Activated CD4-positive, alpha-beta T cell treated with anti-CD3 and anti-CD28 coated beads, Interleukin-2, amount 10 ng/mL, durations not matched to agents 7 days and 5 days (primary cell): ENCODE measurements at regions of chr12 and their contacts with region 1.

Region 1: GRCh38 chr12:6451348-6452244 is at the start of gene TAPBPL:
- DNase-seq: peak; percentile 88
- H3K4me3 Mint-ChIP-seq: peak within 1 kb of the TSS; percentile 100
- H3K27ac Mint-ChIP-seq: peak within 1 kb of the TSS; percentile 98
- H3K4me1 Mint-ChIP-seq: peaks cover 71% of the 10 kb centered on the region
- H3K27me3 Mint-ChIP-seq: no peaks in the 10 kb centered on the region
- total RNA-seq, gene TAPBPL: 45.8 to 47.9 TPM

Region 2: DNA sequence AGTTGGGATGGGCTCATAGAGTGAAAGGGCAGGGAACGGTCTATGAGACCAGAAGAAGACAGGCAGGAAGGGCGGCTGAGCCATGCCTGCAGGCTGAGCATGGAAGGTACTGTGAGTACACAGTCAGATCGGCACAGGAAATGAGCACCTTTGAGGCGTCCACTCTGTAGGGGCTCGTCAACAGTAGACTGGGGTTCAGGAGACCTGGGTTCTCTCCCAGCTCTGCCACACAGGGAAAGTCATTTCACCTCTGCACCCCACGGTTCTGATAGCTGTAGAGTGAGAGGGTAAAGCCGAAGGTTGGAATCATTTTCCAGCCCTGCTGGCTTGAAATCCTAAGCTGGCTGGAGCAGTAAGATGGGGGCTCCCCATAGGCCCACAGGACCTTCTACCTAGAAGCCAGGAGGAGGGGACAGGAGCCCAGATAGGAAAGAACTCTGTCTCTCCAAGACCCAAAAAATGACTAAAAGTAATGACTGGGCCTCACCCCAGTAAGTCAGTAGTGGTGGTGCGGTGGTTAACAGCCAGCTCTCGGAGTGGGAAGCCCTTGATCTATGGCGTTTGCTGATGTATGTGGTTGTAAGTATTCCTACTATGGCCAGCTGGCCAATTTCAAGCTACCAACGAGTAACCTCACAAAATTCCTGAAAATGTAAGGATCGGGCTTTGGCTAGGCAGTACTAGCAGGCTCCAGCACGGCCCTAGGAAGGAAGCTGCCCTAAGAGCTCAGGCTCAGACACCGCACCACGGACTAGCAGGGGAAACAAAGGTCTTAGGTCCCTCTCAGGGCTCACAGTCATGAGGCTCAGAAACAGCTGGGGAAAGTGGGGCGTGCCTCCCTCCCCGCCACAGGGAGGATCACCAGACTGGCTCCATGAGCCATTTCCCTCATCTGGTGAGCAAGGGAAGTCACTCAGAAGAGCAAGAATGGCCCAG is 17.1 kb before region 1 on chr12:
- CTCF ChIA-PET with region 1: interaction called, 11 read pairs
- POLR2A ChIA-PET with region 1: no interaction called
- DNase-seq: peak; percentile 56
- H3K4me3 Mint-ChIP-seq: no peak overlapping the region
- H3K27ac Mint-ChIP-seq: peak overlapping the region; percentile 93
- H3K4me1 Mint-ChIP-seq: peaks cover 52% of the 10 kb centered on the region
- H3K27me3 Mint-ChIP-seq: no peaks in the 10 kb centered on the region